Psoas muscle (tissue), 8 donors: ENCODE measurements at regions of chr4 and their contacts with region 1.

Region 1: GRCh38 chr4:70687821-70688794 is at the start of gene UTP3:
- DNase-seq: peak; percentile 93 to 98
- ATAC-seq: peak; percentile 96 to 98 (median 97)
- H3K4me3 ChIP-seq: peak within 1 kb of the TSS; percentile 92
- H3K27ac ChIP-seq: peak within 1 kb of the TSS; percentile 97
- H3K4me1 ChIP-seq: peaks cover 36% of the 10 kb centered on the region
- H3K27me3 ChIP-seq: peaks cover 0 to under 1% (median 0%) of the 10 kb centered on the region in 3 donors
- CTCF ChIP-seq: peak; percentile 96
- total RNA-seq, gene UTP3: 13.1 to 22.6 (median 20.2) TPM

Region 2: GRCh38 chr4:70601422-70602039 is 86.6 kb before region 1 on chr4:
- intact Hi-C with region 1: loop called (anchors 5 to 10 kb)
- DNase-seq: peak; percentile 19 to 67
- ATAC-seq: peak; percentile 73 to 98 (median 88)
- H3K4me3 ChIP-seq: no peak overlapping the region
- H3K27ac ChIP-seq: no peak overlapping the region
- H3K4me1 ChIP-seq: no peaks in the 10 kb centered on the region
- H3K27me3 ChIP-seq: no peaks in the 10 kb centered on the region
- CTCF ChIP-seq: peak; percentile 86

Region 3: GRCh38 chr4:70651864-70652506 is 36.1 kb before region 1 on chr4:
- intact Hi-C with region 1: loop called in 1 of 2 experiments (anchors 5 kb)
- DNase-seq: no peak
- ATAC-seq: peak in 2 of 4 donors; percentile 58 to 82
- H3K4me3 ChIP-seq: no peak overlapping the region
- H3K27ac ChIP-seq: no peak overlapping the region
- H3K4me1 ChIP-seq: no peaks in the 10 kb centered on the region
- H3K27me3 ChIP-seq: no peaks in the 10 kb centered on the region
- CTCF ChIP-seq: peak; percentile 58

Region 4: DNA sequence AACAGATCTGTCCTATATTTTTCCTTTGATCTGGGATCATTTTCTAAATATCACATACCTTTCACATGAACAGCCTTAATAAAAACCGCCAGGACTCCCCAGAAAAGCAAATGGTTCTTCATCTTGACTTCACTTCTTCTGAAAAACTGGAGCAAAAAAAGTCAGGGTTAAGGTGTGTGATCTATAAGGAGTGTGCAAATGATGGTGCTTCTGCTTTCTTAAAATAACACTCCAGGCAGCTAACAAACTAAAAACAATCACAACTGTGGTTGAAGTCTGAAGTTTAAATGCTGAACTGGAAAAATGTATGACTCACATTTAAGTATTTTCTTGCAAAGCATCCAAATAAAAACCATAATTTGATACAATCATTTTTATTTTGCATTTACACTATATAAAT is 21.7 kb before region 1 on chr4 and contains the start of gene JCHAIN:
- intact Hi-C with region 1: no loop called
- DNase-seq: no peak
- ATAC-seq: no peak
- H3K4me3 ChIP-seq: no peak within 1 kb of the TSS
- H3K27ac ChIP-seq: no peak within 1 kb of the TSS
- H3K4me1 ChIP-seq: no peaks in the 10 kb centered on the region
- H3K27me3 ChIP-seq: no peaks in the 10 kb centered on the region
- CTCF ChIP-seq: no peak
- total RNA-seq, gene JCHAIN: 0.50 to 3.0 (median 1.7) TPM

Region 5: DNA sequence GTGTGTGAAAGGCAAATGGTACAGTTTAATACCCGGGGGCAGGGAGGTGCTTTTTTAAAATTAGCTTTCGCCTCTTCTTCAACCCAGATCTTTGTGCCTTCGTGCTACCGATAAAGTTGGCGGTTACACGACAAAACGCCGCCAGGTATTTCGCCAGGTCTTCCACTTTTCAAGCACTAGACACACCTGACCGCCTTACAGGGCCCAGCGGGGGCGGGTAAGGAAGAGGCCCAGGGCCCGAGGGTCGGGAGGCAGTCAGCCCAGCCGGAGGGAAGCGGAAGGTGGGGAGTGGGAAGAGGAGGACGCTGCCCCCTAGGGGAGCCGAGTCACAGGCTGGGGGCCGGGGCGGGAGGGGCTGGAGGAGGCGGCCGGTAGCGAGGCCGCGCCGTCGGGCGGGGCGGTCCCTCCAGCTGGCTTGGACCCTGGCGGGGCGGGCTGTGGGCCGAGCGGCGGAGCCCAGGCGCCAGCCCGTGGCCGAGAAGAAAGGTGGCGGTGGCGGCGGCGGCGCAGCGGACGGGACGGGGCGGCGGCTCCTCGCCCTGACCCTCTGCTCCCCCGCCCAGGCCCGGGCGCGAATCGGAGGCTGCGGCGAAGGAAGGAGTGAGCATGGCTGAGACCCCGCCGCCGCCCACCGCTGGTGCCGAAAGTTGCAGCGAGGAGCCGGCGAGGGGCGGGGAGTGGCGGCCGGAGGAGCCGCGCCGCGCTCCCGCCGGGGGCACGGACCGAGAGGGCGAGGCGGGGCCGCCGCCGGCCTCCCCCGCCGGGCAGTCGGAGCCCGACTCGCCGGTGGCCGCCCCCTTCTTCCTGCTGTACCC is 16.4 kb after region 1 on chr4:
- intact Hi-C with region 1: loop called in 1 of 2 experiments (anchors 2 kb)
- DNase-seq: peak; percentile 86 to 87
- ATAC-seq: peak; percentile 73 to 84 (median 76)
- H3K4me3 ChIP-seq: peak overlapping the region; percentile 85
- H3K27ac ChIP-seq: peak overlapping the region; percentile 98
- H3K4me1 ChIP-seq: peaks cover 20% of the 10 kb centered on the region
- H3K27me3 ChIP-seq: no peaks in the 10 kb centered on the region
- CTCF ChIP-seq: peak; percentile 33

Region 6: DNA sequence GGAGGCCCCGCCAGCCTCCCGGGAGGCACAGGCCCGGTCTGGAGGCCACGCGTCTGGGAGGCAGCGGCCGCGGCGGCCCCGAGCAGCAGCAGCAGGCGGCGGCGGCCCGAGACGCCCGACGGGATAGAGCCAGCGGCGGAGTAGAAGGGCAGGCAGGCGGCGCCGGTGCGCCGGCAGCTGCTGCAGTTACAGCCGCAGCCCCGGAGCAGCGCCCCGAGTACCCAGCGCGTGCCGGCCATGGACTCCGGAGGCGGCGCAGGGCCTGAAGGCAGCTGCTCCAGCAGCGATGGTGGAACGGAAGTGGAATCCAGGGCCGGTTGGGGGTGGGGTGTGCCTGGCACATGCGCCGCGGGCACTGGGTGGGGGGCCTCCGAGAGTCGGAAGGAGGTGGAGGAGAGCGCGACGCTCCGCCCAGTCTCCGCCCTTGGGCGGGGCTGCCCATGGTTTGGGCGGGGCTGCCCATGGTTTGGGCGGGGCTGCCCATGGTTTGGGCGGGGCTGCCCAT is 151.5 kb after region 1 on chr4 and contains the start of gene GRSF1:
- intact Hi-C with region 1: loop called in 1 of 2 experiments (anchors 1 kb)
- DNase-seq: peak; percentile 95 to 97
- ATAC-seq: peak; percentile 95 to 97 (median 96)
- H3K4me3 ChIP-seq: peak within 1 kb of the TSS; percentile 95
- H3K27ac ChIP-seq: peak within 1 kb of the TSS; percentile 97
- H3K4me1 ChIP-seq: peaks cover 19% of the 10 kb centered on the region
- H3K27me3 ChIP-seq: no peaks in the 10 kb centered on the region
- CTCF ChIP-seq: peak; percentile 21
- total RNA-seq, gene GRSF1: 114 to 144 (median 130) TPM

Region 7: GRCh38 chr4:70901984-70902576 is 214.0 kb after region 1 on chr4 and contains the start of gene MOB1B:
- intact Hi-C with region 1: loop called in 1 of 2 experiments (anchors 10 kb)
- DNase-seq: peak; percentile 87 to 90
- ATAC-seq: peak; percentile 95 to 97 (median 96)
- H3K4me3 ChIP-seq: peak within 1 kb of the TSS; percentile 90
- H3K27ac ChIP-seq: peak within 1 kb of the TSS; percentile 85
- H3K4me1 ChIP-seq: peaks cover 4% of the 10 kb centered on the region
- H3K27me3 ChIP-seq: no peaks in the 10 kb centered on the region
- CTCF ChIP-seq: peak; percentile 43
- total RNA-seq, gene MOB1B: 9.8 to 22.3 (median 12.8) TPM

Region 8: DNA sequence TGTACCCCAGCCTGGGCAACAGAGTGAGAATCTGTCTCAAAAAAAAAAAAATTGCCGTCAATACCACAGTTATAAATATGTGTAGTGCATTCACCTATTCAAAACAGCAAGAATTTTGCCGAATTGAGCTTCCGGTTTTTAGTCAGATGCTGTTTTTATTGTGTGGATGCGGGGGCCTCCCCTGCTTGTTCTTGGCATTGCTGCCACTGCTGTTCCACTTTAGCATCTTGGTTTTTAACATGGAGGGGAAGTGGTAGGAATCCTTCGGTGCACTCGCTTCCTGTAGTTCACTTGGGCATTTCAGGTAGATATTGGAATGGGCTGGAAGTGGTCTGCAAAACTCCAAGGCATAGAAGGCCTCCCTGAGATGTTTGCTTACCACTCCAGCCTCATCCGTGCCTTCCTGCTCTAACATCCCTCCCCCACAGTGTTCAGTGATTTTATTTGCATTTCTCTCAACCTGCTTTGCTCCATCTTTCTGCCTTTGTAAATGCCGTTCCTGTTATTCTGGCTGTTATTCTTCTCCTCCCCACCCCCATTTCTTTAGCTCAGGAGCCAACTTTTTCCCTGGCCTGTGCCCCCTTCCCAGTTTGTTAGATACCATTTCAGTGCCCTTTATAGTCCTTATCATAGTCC is 239.5 kb after region 1 on chr4:
- intact Hi-C with region 1: no loop called
- DNase-seq: no peak
- ATAC-seq: no peak
- H3K4me3 ChIP-seq: no peak overlapping the region
- H3K27ac ChIP-seq: no peak overlapping the region
- H3K4me1 ChIP-seq: no peaks in the 10 kb centered on the region
- H3K27me3 ChIP-seq: no peaks in the 10 kb centered on the region
- CTCF ChIP-seq: no peak

Region 9: DNA sequence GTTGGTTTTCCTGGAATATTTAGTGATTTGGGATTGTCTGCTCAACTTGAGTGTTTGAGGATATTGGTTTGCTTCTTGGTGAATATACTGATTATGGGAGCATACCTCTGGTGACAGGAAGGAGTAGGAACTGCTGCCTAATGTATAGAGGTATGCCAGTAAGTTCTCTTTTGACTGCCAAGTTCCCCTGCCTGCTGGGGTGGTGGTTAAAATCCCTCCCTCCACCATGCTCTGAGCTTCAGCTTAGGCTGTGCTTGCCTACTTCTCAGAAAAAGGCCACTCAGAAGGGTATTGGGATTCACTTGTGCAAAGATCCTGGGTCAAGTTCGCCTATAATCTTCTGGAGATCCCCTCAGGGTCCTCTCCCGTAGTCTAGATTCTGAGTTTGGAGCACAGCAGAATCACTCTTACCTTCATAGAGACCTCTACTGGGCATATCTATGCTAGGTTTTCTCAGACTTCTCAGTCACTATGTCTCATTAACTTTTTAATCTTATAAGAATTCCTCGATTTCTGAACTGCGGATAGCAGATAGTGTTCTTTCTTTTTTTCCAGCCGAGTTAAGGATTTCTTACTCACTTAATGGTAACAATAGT is 260.7 kb after region 1 on chr4:
- intact Hi-C with region 1: no loop called
- DNase-seq: no peak
- ATAC-seq: no peak
- H3K4me3 ChIP-seq: no peak overlapping the region
- H3K27ac ChIP-seq: no peak overlapping the region
- H3K4me1 ChIP-seq: no peaks in the 10 kb centered on the region
- H3K27me3 ChIP-seq: no peaks in the 10 kb centered on the region
- CTCF ChIP-seq: no peak

Region 10: DNA sequence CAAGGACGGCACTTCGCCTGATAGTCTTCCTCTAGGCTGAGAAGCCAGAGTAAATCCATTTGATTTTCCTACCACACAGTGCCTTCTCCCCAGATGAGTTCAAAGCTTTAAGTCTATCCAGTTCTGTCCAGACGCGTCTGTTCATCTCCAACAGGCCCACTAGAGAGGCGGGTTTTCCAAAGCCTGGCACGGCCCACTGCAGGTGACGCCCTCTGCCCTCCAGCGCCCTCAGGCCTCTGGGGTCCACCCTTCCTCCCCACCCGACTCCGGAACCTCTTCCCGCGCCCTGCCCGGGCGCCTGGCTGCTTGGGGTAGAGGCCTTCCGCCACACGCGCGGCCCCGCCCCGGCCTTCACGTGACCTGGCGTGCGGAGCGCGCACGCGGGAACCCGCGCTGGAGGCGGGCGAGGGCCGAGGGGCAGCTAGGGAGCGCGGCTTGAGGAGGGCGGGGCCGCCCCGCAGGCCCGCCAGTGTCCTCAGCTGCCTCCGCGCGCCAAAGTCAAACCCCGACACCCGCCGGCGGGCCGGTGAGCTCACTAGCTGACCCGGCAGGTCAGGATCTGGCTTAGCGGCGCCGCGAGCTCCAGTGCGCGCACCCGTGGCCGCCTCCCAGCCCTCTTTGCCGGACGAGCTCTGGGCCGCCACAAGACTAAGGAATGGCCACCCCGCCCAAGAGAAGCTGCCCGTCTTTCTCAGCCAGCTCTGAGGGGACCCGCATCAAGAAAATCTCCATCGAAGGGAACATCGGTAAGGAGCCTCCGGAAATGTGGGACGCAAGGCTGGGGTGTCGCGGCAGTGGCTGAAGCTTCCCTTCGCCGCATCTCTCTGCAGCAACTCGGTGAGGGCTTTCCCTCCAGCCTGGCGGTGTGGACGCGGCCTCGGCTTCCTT is 305.3 kb after region 1 on chr4 and contains the start of gene DCK:
- intact Hi-C with region 1: loop called in 1 of 2 experiments (anchors 5 kb)
- DNase-seq: peak; percentile 92 to 96
- ATAC-seq: peak; percentile 99 to 100 (median 99)
- H3K4me3 ChIP-seq: peak within 1 kb of the TSS; percentile 92
- H3K27ac ChIP-seq: peak within 1 kb of the TSS; percentile 86
- H3K4me1 ChIP-seq: peaks cover 26% of the 10 kb centered on the region
- H3K27me3 ChIP-seq: no peaks in the 10 kb centered on the region
- CTCF ChIP-seq: no peak
- total RNA-seq, gene DCK: 4.5 to 6.9 (median 5.8) TPM